ENCODE measurements at regions of chr16 and their contacts with region 1.

Region 1: DNA sequence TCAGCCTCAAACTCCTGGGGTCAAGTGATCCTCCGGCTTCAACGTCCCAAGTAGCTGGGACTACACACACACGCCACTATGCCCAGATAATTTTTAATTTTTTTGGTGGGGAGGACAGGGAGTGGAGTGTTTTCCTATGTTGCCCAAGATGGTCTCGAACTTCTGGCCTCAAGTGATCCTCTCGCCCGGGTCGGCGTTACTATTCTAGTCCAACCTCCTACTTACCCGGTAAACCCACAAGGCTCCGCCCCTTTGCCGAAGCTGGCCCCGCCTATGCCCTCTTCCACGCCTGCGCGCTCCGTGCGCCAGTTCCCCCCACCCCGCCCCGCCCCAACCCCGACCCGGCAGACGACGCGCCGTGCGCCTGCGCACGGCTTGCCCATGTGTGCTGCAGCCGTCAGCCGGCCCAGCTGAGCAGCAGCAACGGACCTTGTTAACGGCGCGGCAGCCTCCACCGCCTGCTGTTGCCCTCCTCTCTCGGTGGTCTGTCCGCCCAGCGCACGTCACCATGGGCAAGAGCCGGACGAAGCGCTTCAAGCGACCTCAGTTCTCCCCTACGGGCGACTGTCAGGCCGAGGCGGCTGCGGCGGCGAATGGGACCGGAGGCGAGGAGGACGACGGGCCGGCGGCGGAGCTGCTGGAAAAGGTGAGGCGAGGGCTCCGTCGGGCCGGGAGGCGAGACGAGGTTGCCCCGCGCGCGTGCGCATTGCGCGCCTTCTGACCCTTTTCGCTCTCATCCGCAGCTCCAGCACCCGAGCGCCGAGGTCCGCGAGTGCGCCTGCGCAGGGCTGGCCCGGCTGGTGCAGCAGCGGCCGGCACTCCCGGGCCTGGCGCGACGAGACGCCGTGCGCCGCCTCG is at the start of gene HEATR3:
- DNase-seq: peak; percentile 84
- H3K4me3 ChIP-seq: peak within 1 kb of the TSS; percentile 81 to 88
- H3K27ac ChIP-seq: peak within 1 kb of the TSS; percentile 88
- H3K4me1 ChIP-seq: no peaks in the 10 kb centered on the region
- H3K27me3 ChIP-seq: no peaks in the 10 kb centered on the region
- CTCF ChIP-seq: no peak
- POLR2A ChIP-seq: no peak
- total RNA-seq, gene HEATR3: 18.8 to 22.7 TPM

Region 2: DNA sequence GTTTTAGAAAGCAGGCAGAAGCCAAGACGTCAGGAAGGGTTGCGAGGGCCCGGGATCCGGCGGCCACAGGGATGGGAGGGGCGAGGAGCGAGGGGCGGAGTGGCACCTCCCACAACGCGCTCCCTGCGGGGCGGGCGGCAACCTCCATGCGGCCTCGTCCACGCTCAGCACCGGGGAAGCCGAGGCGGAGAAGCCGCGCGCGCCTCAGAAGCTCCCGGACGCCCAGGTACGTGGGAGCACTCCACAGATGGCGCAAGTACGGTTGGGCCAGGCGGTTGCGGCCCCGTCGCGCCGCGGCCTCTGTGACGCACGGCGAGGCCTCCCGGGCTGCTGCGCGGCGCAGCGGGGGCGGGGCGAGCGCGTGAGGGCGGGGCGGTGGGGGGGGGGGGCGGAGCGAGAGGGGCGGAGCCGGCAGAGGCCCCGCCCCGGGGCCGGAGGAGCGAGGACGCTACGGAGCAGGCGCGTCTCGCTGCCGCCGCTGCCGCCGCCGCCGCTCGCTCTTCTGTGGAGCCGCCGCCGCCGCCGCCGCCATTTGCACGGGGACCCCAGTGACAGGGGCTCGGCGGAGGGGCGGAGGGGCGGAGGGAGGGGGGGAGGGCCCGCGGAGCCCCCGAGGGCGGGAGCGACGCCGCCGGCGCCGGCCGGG is 87.1 kb after region 1 on chr16 and contains the start of gene TENT4B:
- intact Hi-C with region 1: loop called (anchors 2 kb)
- DNase-seq: peak; percentile 79
- H3K4me3 ChIP-seq: peak within 1 kb of the TSS; percentile 72 to 91
- H3K27ac ChIP-seq: peak within 1 kb of the TSS; percentile 93 to 96
- H3K4me1 ChIP-seq: no peaks in the 10 kb centered on the region
- H3K27me3 ChIP-seq: no peaks in the 10 kb centered on the region
- CTCF ChIP-seq: peak in 1 of 4 experiments; percentile 4
- POLR2A ChIP-seq: peak; percentile 75
- total RNA-seq, gene TENT4B: 11.5 to 15.1 TPM

Region 3: DNA sequence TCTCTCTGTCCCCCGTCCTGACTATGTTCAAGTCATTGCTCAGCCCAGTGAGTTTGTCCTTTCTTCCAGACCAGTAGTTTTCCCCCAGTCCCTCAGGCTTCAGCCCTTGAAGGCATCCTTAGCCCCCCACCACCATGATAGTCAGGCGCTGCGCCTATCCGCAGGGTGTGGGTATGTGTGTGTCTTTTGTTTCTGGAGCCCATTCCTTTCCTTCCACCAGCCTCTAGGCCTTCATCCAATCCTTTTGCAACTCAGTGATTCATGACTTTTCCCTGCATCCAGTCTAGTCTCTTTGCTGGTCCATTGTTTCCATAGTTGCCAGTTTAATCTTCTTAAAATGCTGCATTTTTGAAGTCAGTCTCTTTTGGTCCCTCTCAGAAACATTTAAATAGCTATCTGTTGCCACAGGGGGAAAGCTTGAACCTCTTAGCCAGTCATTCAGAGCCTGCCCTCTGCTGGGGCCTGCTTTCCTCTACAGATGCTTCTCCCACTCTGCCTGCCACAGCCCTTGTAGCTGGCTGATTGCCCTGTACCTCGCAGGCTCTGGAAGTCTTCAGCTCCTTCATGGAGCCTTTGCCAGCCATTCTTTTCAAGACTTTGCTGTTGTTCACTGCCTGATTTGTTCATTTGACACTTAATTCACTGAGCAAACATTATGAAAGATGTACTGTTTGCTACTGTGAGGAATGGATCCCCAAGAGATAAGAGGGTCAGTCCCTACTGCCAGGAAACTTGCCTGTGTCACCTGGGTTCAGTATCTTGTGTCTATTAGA is 144.6 kb after region 1 on chr16:
- intact Hi-C with region 1: loop called (anchors 5 kb)
- DNase-seq: peak; percentile 85
- H3K4me3 ChIP-seq: no peak overlapping the region
- H3K27ac ChIP-seq: no peak overlapping the region
- H3K4me1 ChIP-seq: peaks cover 3% of the 10 kb centered on the region
- H3K27me3 ChIP-seq: no peaks in the 10 kb centered on the region
- CTCF ChIP-seq: peak; percentile 20 to 76 (median 60)
- POLR2A ChIP-seq: no peak

Region 4: DNA sequence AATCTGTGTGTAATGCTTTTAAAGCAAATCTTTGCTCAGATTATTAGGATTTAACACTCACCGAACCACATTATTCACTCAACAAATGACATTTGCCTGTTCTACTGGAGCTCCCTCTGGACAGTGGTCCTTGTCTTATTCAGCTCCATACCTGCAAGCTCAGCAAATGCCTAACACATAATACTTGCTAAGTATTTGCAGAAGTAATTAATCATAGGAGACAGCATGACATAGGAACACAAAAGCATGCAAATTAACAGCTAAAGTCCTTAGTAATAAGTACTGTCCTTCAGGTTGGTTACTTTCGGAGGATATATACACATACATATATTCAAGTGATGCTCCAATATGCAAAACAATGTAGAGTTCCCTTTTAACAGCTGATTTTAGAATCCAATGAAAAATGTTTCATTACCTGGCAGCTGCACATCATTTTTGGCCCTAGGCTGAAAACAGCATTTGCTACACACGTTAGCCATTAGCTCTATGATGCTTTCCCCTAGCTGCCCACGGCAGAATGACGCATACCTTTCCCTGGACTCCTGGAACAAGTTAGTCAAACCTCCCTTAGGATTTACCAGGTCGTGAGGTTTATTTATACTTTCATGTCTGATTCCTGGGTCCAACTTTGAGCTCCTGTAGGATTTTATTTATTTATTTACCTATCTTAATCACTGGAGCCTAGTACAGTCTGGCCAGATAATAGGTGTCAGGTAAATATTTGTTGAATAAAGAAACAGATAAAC is 294.4 kb after region 1 on chr16:
- intact Hi-C with region 1: loop called (anchors 5 kb)
- DNase-seq: no peak
- H3K4me3 ChIP-seq: no peak overlapping the region
- H3K27ac ChIP-seq: no peak overlapping the region
- H3K4me1 ChIP-seq: peaks cover 4% of the 10 kb centered on the region
- H3K27me3 ChIP-seq: no peaks in the 10 kb centered on the region
- CTCF ChIP-seq: no peak
- POLR2A ChIP-seq: no peak

Region 5: GRCh38 chr16:50403491-50403890 is 337.6 kb after region 1 on chr16:
- intact Hi-C with region 1: no loop called
- DNase-seq: no peak
- H3K4me3 ChIP-seq: no peak overlapping the region
- H3K27ac ChIP-seq: no peak overlapping the region
- H3K4me1 ChIP-seq: no peaks in the 10 kb centered on the region
- H3K27me3 ChIP-seq: no peaks in the 10 kb centered on the region
- CTCF ChIP-seq: no peak
- POLR2A ChIP-seq: no peak

Measured in prostate gland (tissue), 2 donors.